ENCODE measurements at regions of chr4 and their contacts with region 1.

Region 1: GRCh38 chr4:6327041-6327917 is 57.6 kb downstream of the WFS1 start:
- H3K4me3 ChIP-seq: no peak overlapping the region
- H3K27ac ChIP-seq: no peak overlapping the region
- H3K4me1 ChIP-seq: no peaks in the 10 kb centered on the region
- CTCF ChIP-seq: peak; percentile 87

Region 2: DNA sequence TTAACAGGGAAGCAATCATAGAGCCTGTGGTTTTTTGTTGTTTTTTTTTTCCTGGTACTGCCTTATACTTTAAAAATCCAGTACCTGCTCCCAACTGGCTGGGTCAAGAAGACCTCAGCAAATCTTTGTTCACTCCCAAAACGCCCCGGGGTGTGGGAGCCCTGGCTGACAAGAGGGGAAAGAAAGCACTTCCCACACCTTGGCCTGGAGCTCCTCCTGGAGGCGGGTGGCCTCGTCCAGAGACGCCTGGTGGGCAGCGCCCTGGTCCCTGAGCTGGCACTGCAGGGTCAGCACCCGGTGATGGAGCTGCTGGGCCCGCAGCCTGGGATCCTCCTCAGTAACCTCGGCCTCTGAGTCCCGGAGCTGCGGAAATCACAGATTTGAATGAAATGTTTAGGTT is 347.3 kb before region 1 on chr4:
- CTCF ChIA-PET with region 1: no interaction called
- POLR2A ChIA-PET with region 1: no interaction called
- H3K4me3 ChIP-seq: no peak overlapping the region
- H3K27ac ChIP-seq: no peak overlapping the region
- H3K4me1 ChIP-seq: no peaks in the 10 kb centered on the region
- CTCF ChIP-seq: peak; percentile 33; the same call in 1 of the 2 replicates

Region 3: GRCh38 chr4:6200011-6200921 is 127.0 kb before region 1 on chr4 and contains the start of gene JAKMIP1:
- CTCF ChIA-PET with region 1: no interaction called
- POLR2A ChIA-PET with region 1: no interaction called
- H3K4me3 ChIP-seq: peak within 1 kb of the TSS; percentile 29
- H3K27ac ChIP-seq: no peak within 1 kb of the TSS
- H3K4me1 ChIP-seq: no peaks in the 10 kb centered on the region
- CTCF ChIP-seq: no peak

Region 4: GRCh38 chr4:6250235-6250983 is 76.9 kb before region 1 on chr4:
- CTCF ChIA-PET with region 1: interaction called, 203 read pairs
- POLR2A ChIA-PET with region 1: no interaction called
- H3K4me3 ChIP-seq: no peak overlapping the region
- H3K27ac ChIP-seq: no peak overlapping the region
- H3K4me1 ChIP-seq: no peaks in the 10 kb centered on the region
- CTCF ChIP-seq: peak; percentile 24; the same call in 1 of the 2 replicates

Region 5: DNA sequence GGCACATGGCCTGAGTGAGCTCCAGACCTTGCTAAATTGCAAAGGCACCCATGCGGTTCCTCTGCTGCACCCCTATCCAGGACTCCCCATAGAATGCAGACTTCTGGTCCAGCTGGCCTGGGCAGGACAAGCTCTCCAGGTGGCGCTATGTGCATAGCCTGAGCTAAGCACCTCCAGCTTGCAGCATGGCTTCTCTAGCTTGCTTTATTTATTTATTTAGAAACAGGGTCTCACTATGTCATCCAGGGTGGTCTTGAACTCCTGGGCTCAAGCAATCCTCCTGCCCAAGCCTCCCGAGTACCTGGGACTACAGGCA is 63.1 kb before region 1 on chr4:
- CTCF ChIA-PET with region 1: interaction called, 82 read pairs
- POLR2A ChIA-PET with region 1: no interaction called
- H3K4me3 ChIP-seq: no peak overlapping the region
- H3K27ac ChIP-seq: no peak overlapping the region
- H3K4me1 ChIP-seq: no peaks in the 10 kb centered on the region
- CTCF ChIP-seq: 0 out of 2 replicates have a peak, but pooled peaks have one; percentile 20

Region 6: GRCh38 chr4:6343950-6344408 is 16.7 kb after region 1 on chr4:
- CTCF ChIA-PET with region 1: interaction called, 22 read pairs
- POLR2A ChIA-PET with region 1: no interaction called
- H3K4me3 ChIP-seq: no peak overlapping the region
- H3K27ac ChIP-seq: no peak overlapping the region
- H3K4me1 ChIP-seq: no peaks in the 10 kb centered on the region
- CTCF ChIP-seq: no peak